ENCODE measurements at regions of chr4 and their contacts with region 1.

Region 1: GRCh38 chr4:94390804-94391410 is 48.3 kb upstream of the HPGDS start:
- DNase-seq: peak; percentile 41
- H3K4me3 ChIP-seq: no peak overlapping the region
- H3K27ac ChIP-seq: no peak overlapping the region
- H3K4me1 ChIP-seq: no peaks in the 10 kb centered on the region
- H3K27me3 ChIP-seq: no peaks in the 10 kb centered on the region
- CTCF ChIP-seq: peak; percentile 33 to 39
- POLR2A ChIP-seq: no peak

Region 2: DNA sequence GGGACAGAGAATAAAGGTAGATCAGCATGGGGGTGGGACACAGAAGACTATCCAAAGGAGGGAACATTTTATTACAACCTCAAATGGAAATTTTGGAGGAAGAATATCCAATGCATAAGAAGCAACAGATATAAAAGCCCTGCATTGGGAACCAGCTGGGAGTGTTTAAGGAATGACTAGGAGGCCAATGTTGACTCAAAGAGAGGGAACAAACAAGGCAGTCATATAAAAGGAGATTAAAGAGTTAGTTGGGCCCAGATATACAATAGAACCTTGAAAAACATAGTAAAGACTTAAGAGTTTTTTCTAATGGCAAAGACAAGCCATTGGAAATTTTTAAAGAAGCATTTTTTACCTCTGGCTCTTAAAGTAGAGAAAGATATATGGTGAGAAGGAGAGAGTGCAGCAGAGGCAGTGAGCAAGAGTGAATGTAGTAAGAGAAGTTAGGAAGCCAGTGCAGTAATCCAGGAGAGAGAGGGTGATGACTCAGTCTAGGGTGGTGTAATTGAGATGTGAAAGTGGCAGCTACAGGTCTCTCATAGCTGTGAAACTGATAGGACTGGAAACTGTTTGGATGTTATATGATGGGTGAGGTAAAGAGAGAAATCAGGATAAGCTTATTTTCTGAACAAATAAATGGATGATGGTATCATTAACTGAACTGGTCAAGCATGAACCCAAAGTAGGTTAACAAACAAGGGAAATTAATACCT is 744.5 kb before region 1 on chr4:
- CTCF ChIA-PET with region 1: no interaction called
- POLR2A ChIA-PET with region 1: no interaction called
- dilution Hi-C with region 1: no loop called
- intact Hi-C with region 1: no loop called
- DNase-seq: no peak
- H3K4me3 ChIP-seq: no peak overlapping the region
- H3K27ac ChIP-seq: no peak overlapping the region
- H3K4me1 ChIP-seq: no peaks in the 10 kb centered on the region
- H3K27me3 ChIP-seq: no peaks in the 10 kb centered on the region
- CTCF ChIP-seq: no peak
- POLR2A ChIP-seq: no peak

Region 3: GRCh38 chr4:94332983-94333590 is 57.8 kb before region 1 on chr4:
- CTCF ChIA-PET with region 1: interaction called, 49 read pairs
- POLR2A ChIA-PET with region 1: no interaction called
- dilution Hi-C with region 1: no loop called
- intact Hi-C with region 1: loop called (anchors 1 kb)
- DNase-seq: peak; percentile 28
- H3K4me3 ChIP-seq: no peak overlapping the region
- H3K27ac ChIP-seq: no peak overlapping the region
- H3K4me1 ChIP-seq: no peaks in the 10 kb centered on the region
- H3K27me3 ChIP-seq: no peaks in the 10 kb centered on the region
- CTCF ChIP-seq: peak in 1 of 2 donors; percentile 32
- POLR2A ChIP-seq: no peak

Region 4: DNA sequence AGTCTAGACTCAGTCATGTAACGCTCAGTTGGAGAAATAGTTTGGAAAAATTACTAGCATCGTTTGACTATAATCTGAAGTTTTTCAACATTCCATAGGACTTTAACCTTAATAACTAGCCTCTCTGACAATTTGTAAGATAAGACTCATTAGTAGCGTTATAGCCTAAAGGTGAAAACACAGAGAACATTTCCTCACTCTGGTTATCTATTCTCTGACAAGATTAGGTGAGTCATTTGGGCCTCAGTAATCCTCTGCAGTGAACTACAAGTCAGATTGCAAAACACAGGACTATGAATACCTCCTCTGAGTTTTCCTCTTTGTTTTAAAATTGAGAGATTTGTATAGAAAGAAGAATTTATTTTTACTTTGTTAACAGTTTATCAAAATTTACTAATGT is 29.0 kb after region 1 on chr4:
- CTCF ChIA-PET with region 1: no interaction called
- POLR2A ChIA-PET with region 1: no interaction called
- dilution Hi-C with region 1: no loop called
- intact Hi-C with region 1: no loop called
- DNase-seq: no peak
- H3K4me3 ChIP-seq: no peak overlapping the region
- H3K27ac ChIP-seq: no peak overlapping the region
- H3K4me1 ChIP-seq: no peaks in the 10 kb centered on the region
- H3K27me3 ChIP-seq: no peaks in the 10 kb centered on the region
- CTCF ChIP-seq: no peak
- POLR2A ChIP-seq: no peak

Region 5: GRCh38 chr4:95095348-95095974 is 704.6 kb after region 1 on chr4:
- CTCF ChIA-PET with region 1: no interaction called
- POLR2A ChIA-PET with region 1: no interaction called
- dilution Hi-C with region 1: no loop called
- intact Hi-C with region 1: loop called (anchors 10 kb)
- DNase-seq: peak; percentile 58
- H3K4me3 ChIP-seq: no peak overlapping the region
- H3K27ac ChIP-seq: no peak overlapping the region
- H3K4me1 ChIP-seq: no peaks in the 10 kb centered on the region
- H3K27me3 ChIP-seq: no peaks in the 10 kb centered on the region
- CTCF ChIP-seq: peak; percentile 34 to 35
- POLR2A ChIP-seq: no peak

Measured in endothelial cell of umbilical vein (primary cell).